Mammary epithelial cell (primary cell): ENCODE measurements at regions of chr2 and their contacts with region 1.

Region 1: GRCh38 chr2:118661179-118661578 is 186.3 kb downstream of the EN1 start:
- DNase-seq: no peak
- H3K4me3 ChIP-seq: no peak overlapping the region
- H3K27ac ChIP-seq: no peak overlapping the region
- H3K4me1 ChIP-seq: no peaks in the 10 kb centered on the region
- H3K27me3 ChIP-seq: no peaks in the 10 kb centered on the region
- CTCF ChIP-seq: peak in 1 of 2 donors; percentile 1

Region 2: DNA sequence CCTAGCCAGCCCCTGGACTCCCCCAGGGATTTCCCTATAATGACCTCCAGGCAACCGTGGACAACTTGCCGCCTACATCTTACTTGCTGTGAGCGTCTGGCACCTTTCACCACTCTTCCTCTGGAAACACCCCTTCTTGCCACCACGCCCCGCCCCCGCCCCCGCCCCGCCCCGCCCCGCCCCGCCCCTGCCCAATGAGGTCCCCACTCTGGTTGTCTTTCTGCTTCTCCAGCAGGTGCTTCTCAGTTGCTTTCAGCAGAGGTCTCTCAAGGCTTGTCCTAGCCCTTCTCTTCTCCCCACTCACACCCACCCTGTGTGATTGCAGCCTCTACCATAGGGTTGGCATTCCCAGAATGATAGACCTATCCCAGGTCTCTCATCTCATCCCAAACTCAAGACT is 28.3 kb before region 1 on chr2:
- CTCF ChIA-PET with region 1: no interaction called
- dilution Hi-C with region 1: no loop called
- in situ Hi-C with region 1: no loop called
- intact Hi-C with region 1: no loop called
- DNase-seq: no peak
- H3K4me3 ChIP-seq: no peak overlapping the region
- H3K27ac ChIP-seq: no peak overlapping the region
- H3K4me1 ChIP-seq: no peaks in the 10 kb centered on the region
- H3K27me3 ChIP-seq: peaks cover 4% of the 10 kb centered on the region
- CTCF ChIP-seq: no peak

Region 3: DNA sequence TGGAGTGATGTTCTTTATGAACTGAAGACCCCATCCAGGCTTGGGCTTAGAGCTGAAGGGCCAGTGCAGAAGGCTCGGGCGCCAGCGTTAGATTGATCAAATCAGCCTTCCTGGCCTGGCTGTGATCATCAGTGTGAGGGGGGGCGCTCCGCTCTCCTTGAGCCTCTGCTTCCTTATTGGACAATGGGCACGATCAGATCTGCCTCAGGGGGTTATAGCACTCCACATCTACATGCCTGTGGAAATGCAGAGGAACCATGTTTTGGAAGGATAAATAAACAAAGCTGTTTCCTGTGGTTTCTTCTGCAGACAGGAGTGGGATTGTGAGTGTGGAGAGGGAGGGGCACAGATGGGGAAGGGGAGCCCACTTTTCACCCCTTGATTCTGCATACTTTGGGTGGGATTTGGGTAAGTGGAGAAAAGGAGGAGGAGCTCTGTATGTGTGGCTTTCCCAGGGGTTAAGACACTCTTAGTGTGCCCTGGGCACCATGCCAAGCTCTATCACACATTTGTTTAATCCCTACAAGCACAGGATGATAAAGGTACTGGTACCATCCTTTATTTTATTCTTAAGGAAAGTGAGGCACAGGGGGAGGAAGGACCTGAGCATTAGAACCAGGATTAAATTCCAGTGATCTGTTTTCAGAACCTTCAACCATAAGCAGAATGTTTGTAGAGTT is 35.7 kb after region 1 on chr2:
- CTCF ChIA-PET with region 1: no interaction called
- dilution Hi-C with region 1: loop called (anchors 5 kb)
- in situ Hi-C with region 1: no loop called
- intact Hi-C with region 1: no loop called
- DNase-seq: no peak
- H3K4me3 ChIP-seq: no peak overlapping the region
- H3K27ac ChIP-seq: no peak overlapping the region
- H3K4me1 ChIP-seq: peaks cover 3% of the 10 kb centered on the region
- H3K27me3 ChIP-seq: no peaks in the 10 kb centered on the region
- CTCF ChIP-seq: no peak

Region 4: DNA sequence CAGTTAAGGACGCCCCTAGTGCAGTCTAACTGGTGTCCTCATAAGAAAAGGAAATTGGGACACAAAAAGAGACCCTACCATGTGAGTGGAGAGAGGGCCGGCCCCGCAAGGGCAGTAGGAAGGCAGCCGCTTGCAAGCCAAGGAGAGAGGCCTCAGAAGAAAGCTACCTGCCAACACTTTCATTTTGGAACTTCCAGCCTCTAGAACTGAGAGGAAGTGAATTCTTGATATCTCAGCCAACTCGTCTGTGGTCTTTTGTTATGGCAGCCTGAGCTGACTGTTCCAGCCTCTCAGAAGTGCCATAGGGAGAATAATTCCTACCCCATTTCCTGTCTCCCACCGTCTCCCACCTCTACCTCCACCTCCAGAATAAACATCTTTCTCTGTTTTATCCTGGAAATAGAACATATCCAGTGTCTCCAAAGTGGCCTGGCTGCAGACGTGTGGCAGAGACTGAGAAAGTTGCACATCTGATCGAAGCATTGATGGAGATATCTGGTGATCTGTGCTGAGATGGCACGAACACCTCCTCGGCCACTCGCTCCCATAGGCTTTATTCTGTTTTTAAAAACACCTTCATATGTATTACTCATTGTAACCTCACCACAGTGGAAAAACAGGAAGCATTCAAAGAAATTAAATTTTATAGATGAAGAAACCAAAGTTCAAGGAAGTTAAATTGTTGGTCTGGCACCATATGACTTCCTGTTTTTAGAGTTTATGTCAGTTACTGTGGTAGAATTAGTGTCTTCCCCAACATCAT is 241.3 kb after region 1 on chr2:
- CTCF ChIA-PET with region 1: no interaction called
- dilution Hi-C with region 1: no loop called
- in situ Hi-C with region 1: no loop called
- intact Hi-C with region 1: no loop called
- DNase-seq: no peak
- H3K4me3 ChIP-seq: no peak overlapping the region
- H3K27ac ChIP-seq: no peak overlapping the region
- H3K4me1 ChIP-seq: no peaks in the 10 kb centered on the region
- H3K27me3 ChIP-seq: peaks cover 3% of the 10 kb centered on the region
- CTCF ChIP-seq: no peak